Caco-2 (cell line): ENCODE measurements at regions of chr12 and their contacts with region 1.

Region 1: DNA sequence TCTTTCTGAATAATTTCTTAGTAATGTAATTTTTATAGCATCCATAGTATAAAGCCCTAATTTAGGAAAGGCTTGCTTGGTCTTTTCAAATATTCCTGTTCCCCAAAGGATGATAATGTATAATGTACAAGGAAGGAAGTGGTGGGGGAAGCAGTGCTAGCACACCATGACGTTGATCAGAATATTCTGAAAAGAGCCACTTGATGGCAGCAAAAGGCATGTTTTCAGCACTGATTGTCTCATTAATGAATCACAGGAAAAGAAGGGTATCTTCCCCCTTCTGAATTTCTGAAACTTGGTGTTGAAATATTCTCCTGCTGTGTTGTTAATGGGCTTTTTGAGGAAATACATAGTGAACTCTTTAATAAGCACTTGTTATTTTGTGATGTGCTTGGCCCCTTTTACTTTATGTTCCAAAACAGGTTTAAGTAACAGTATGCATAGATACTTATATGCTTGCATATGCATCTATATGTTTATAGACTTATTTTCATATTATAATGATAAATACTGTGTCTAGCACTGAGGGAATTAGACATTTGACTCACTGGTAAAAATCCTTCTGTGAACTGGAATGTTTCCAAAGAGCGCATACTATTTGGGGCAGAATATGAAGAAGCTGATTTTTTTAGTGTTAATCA is 122.0 kb downstream of the TMEM117 start:
- DNase-seq: peak in 1 of 2 experiments; percentile 66
- H3K4me3 ChIP-seq: no peak overlapping the region
- H3K4me3 Mint-ChIP-seq: no peak overlapping the region
- H3K27ac Mint-ChIP-seq: no peak overlapping the region
- H3K4me1 ChIP-seq: no peaks in the 10 kb centered on the region; the same call in 1 of the 2 replicates
- H3K4me1 Mint-ChIP-seq: peaks cover 6% of the 10 kb centered on the region
- H3K27me3 ChIP-seq: no peaks in the 10 kb centered on the region
- H3K27me3 Mint-ChIP-seq: no peaks in the 10 kb centered on the region
- CTCF ChIP-seq: peak; percentile 56 to 69

Region 2: DNA sequence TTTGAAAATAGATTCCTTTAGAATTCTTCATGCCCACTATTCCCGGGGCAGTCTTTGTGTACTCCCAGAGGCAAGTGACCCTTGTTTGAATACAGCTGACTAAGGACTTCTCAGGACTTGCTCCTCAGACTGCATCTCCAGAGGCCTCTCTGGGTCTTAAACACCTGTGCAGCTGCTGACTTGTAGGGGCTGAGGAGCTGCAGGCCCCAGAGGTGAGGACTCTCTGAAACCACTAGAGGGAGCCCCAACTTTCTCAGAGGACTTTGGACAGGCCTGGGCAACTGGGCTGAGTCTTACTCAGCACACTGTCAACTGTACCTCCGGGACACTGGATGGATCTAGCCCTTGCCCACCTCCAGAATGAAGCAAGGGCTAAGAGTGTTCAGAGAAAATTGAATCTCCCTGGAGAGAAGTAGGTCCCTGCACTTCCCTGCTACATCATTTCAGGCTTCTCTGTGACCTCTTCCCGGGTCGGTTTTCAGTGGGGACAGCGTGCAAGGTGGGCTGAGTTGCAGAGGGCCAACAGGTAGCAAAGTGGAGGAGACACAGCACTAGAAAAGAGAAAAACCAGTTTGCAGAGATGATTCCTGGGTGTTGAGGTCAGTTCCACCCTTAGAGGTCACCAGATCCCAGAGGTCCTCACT is 42.6 kb after region 1 on chr12:
- CTCF ChIA-PET with region 1: no interaction called
- POLR2A ChIA-PET with region 1: no interaction called
- intact Hi-C with region 1: loop called (anchors 1 kb)
- DNase-seq: peak; percentile 71 to 73
- H3K4me3 ChIP-seq: no peak overlapping the region
- H3K4me3 Mint-ChIP-seq: no peak overlapping the region
- H3K27ac Mint-ChIP-seq: no peak overlapping the region
- H3K4me1 ChIP-seq: peaks cover 2% of the 10 kb centered on the region; the same call in 1 of the 2 replicates
- H3K4me1 Mint-ChIP-seq: no peaks in the 10 kb centered on the region
- H3K27me3 ChIP-seq: no peaks in the 10 kb centered on the region
- H3K27me3 Mint-ChIP-seq: no peaks in the 10 kb centered on the region
- CTCF ChIP-seq: peak; percentile 70 to 78

Region 3: GRCh38 chr12:44441155-44441554 is 483.3 kb after region 1 on chr12:
- CTCF ChIA-PET with region 1: no interaction called
- POLR2A ChIA-PET with region 1: no interaction called
- intact Hi-C with region 1: loop called (anchors 10 kb)
- DNase-seq: no peak
- H3K4me3 ChIP-seq: no peak overlapping the region
- H3K4me3 Mint-ChIP-seq: no peak overlapping the region
- H3K27ac Mint-ChIP-seq: no peak overlapping the region
- H3K4me1 ChIP-seq: 0 out of 2 replicates have a peak, but pooled peaks cover 4% of the 10 kb centered on the region
- H3K4me1 Mint-ChIP-seq: no peaks in the 10 kb centered on the region
- H3K27me3 ChIP-seq: no peaks in the 10 kb centered on the region
- H3K27me3 Mint-ChIP-seq: peaks cover 5% of the 10 kb centered on the region
- CTCF ChIP-seq: no peak

Region 4: DNA sequence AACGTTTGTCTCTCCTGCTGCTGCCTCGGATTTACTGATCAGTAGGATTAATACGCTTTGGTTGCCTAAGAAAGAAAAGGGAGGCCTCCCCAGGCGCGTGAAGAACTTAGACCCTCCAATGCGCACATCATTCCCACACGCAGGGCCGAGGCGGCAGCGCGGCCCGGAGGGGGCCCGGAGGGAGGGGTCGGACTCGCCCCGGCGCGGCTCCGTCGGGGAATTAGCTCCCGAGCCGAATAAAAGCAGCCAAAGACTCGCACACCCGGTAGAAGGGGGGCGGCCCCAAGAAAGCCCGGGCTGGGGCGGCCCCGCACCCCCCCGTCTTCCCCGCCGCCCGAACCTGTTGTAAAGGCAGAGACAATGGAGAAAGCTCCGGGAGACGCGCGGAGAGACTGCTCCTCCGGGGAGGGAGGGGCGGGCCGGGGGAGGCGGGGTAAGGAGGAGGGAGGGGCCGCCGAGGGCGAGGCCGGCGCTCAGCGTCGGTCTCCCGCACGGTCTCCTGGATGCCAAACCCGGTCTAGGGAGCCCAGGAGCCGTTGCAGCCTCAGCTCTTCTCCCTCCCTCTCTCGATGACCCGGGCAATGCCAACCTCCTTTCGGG is 918.2 kb after region 1 on chr12 and contains the start of gene NELL2:
- CTCF ChIA-PET with region 1: no interaction called
- POLR2A ChIA-PET with region 1: no interaction called
- intact Hi-C with region 1: loop called (anchors 2 kb)
- DNase-seq: peak; percentile 45 to 59
- H3K4me3 ChIP-seq: peak within 1 kb of the TSS; percentile 36
- H3K4me3 Mint-ChIP-seq: peak within 1 kb of the TSS; percentile 72
- H3K27ac Mint-ChIP-seq: no peak within 1 kb of the TSS
- H3K4me1 ChIP-seq: no peaks in the 10 kb centered on the region; the same call in none of the 2 replicates
- H3K4me1 Mint-ChIP-seq: peaks cover 19% of the 10 kb centered on the region
- H3K27me3 ChIP-seq: peaks cover 10% of the 10 kb centered on the region
- H3K27me3 Mint-ChIP-seq: peaks cover 23% of the 10 kb centered on the region
- CTCF ChIP-seq: no peak
- total RNA-seq, gene NELL2: 0.70 and 0.81 TPM in 2 replicates